ENCODE measurements at regions of chr6 and their contacts with region 1.

Region 1: GRCh38 chr6:131960371-131961133 is 9.4 kb upstream of the CCN2 start:
- DNase-seq: peak; percentile 18
- ATAC-seq: no peak
- H3K4me3 ChIP-seq: no peak overlapping the region
- H3K27ac ChIP-seq: no peak overlapping the region
- H3K4me1 ChIP-seq: no peaks in the 10 kb centered on the region
- H3K27me3 ChIP-seq: no peaks in the 10 kb centered on the region
- CTCF ChIP-seq: peak; percentile 54; the same call in 1 of the 2 replicates

Region 2: GRCh38 chr6:132041706-132042105 is 81.2 kb after region 1 on chr6:
- CTCF ChIA-PET with region 1: no interaction called
- POLR2A ChIA-PET with region 1: no interaction called
- intact Hi-C with region 1: no loop called
- DNase-seq: no peak
- ATAC-seq: no peak
- H3K4me3 ChIP-seq: no peak overlapping the region
- H3K27ac ChIP-seq: no peak overlapping the region
- H3K4me1 ChIP-seq: no peaks in the 10 kb centered on the region
- H3K27me3 ChIP-seq: no peaks in the 10 kb centered on the region
- CTCF ChIP-seq: no peak

Region 3: GRCh38 chr6:132060591-132060990 is 100.0 kb after region 1 on chr6:
- CTCF ChIA-PET with region 1: no interaction called
- POLR2A ChIA-PET with region 1: no interaction called
- intact Hi-C with region 1: loop called (anchors 1 kb)
- DNase-seq: peak; percentile 82
- ATAC-seq: peak; percentile 92
- H3K4me3 ChIP-seq: no peak overlapping the region
- H3K27ac ChIP-seq: peak overlapping the region; percentile 17; the same call in 1 of the 2 replicates
- H3K4me1 ChIP-seq: peaks cover 28% of the 10 kb centered on the region
- H3K27me3 ChIP-seq: no peaks in the 10 kb centered on the region
- CTCF ChIP-seq: no peak

Region 4: GRCh38 chr6:132161283-132161682 is 200.7 kb after region 1 on chr6:
- CTCF ChIA-PET with region 1: interaction called, 3 read pairs
- POLR2A ChIA-PET with region 1: no interaction called
- intact Hi-C with region 1: loop called (anchors 1 kb)
- DNase-seq: peak; percentile 62
- ATAC-seq: peak; percentile 58
- H3K4me3 ChIP-seq: no peak overlapping the region
- H3K27ac ChIP-seq: no peak overlapping the region
- H3K4me1 ChIP-seq: no peaks in the 10 kb centered on the region
- H3K27me3 ChIP-seq: no peaks in the 10 kb centered on the region
- CTCF ChIP-seq: peak; percentile 72